ENCODE measurements at regions of chr1 and their contacts with region 1.

Region 1: DNA sequence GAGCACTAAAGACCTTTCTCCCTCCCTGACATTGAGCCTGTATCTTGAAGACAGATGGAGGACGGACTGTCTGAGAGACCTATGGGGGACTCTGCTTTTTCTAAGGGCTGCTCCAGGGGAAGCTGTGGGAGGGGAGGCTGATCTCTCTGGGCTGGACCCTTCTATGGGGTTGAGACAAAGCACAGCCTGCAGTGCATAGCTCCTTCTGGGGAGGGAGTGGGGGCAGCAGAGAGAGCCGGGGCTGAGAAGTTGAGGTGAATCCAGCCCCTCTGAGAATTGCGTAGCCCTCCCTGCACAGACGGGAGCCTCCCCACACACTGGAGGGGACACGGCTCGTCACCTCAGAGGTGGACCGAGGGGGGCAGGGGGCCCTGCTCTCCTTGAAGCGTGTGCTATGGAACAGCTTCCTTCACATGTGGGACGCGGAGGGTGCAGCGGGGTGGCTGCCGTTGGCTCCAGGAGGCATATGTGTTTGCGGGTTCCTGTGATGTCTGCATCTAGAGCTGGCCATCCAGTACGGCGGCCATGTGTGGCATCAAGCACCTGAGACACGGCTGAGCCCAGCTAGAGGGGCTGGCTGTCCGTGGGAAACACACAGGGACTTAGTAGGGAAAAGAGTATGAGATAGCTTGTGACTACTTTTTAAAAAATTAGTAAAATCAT is 299.1 kb downstream of the CAMTA1 start:
- DNase-seq: no peak

Region 2: GRCh38 chr1:7070389-7071029 is 13.9 kb before region 1 on chr1:
- CTCF ChIA-PET with region 1: interaction called, 12 read pairs
- POLR2A ChIA-PET with region 1: no interaction called
- DNase-seq: peak; percentile 77

Measured in HEK293T (cell line).